HEK293 (cell line): ENCODE measurements at regions of chr10 and their contacts with region 1.

Region 1: DNA sequence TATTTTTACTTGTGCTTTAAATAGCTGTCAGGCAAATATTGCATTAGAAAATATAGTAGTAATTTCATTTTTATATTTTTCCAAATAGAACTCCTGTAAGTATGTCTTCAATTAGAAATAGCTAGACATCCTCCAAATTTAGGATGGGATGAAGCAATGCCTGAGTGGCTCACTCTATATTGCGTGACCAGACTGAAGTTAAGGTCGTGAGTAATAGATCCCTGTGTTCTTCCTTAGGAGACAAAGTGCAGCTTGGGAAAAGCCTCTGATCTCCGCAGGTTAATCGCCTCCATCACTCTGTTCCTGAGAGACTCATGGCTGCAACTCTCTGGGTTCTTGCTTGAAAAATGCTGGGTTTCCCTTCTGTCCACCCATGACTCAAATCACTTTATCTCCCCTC is 484.8 kb upstream of the ANKRD30A start:
- H3K4me3 ChIP-seq: no peak overlapping the region
- H3K27ac ChIP-seq: no peak overlapping the region
- H3K4me1 ChIP-seq: no peaks in the 10 kb centered on the region
- CTCF ChIP-seq: no peak

Region 2: DNA sequence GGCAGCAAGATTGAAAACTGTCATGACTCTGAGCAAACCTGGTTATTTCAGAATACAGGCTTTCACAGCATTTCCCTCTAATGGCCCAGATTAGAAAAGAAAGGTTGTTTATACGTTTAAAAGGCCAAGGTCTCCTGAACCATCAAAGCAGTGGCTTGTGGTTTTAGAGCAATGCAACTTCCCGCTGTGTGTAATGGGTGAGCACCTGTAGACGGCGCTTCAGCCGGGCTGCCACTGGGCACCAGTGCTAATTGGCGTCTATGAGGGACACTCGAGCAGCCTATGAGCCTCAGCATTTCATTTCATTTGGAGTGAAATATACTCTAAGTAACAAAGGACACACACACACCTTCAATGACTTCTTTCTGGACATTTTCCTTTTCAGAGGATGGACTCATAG is 327.5 kb before region 1 on chr10:
- CTCF ChIA-PET with region 1: no interaction called
- POLR2A ChIA-PET with region 1: no interaction called
- H3K4me3 ChIP-seq: no peak overlapping the region
- H3K27ac ChIP-seq: no peak overlapping the region
- H3K4me1 ChIP-seq: no peaks in the 10 kb centered on the region
- CTCF ChIP-seq: no peak

Region 3: DNA sequence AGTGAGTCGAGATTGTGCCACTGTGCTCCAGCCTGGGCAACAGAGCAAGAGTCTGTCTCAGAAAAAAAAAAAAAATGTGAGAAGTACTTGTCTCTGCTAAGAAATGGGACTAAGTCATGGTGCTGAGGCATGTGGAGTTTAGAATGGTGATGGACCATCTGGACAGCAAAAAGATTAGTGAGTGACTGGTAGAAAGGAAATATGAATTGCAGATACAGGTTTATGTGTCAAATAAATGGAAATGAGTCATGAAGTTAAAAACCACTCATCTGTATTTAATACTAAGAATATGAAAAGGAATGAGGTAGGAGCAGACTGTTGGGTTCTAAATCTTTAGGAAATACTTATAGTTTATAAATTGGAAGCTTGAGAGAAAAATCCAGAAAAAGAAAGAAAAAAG is 140.9 kb before region 1 on chr10:
- CTCF ChIA-PET with region 1: no interaction called
- POLR2A ChIA-PET with region 1: interaction called, 10 read pairs
- H3K4me3 ChIP-seq: no peak overlapping the region
- H3K27ac ChIP-seq: no peak overlapping the region
- H3K4me1 ChIP-seq: no peaks in the 10 kb centered on the region
- CTCF ChIP-seq: no peak

Region 4: DNA sequence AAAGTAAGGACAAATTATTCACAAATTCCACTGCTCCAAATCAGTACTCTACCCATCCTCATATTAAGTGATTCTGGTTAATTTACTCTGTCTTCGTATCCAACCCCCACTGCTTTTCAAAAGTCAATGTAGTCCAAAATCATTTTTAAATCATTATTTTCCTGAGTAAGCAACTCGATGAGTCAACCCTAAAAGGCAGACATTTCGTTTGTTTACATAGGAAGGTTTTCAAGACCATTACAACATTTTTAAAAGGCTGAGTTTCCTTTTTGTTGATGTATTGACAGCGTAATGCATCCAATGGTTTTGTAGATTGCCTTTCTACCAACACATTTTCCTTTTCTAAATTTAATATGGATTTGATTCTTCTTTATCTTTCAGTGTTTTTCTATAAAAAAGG is 38.3 kb before region 1 on chr10:
- CTCF ChIA-PET with region 1: no interaction called
- POLR2A ChIA-PET with region 1: no interaction called
- H3K4me3 ChIP-seq: no peak overlapping the region
- H3K27ac ChIP-seq: no peak overlapping the region
- H3K4me1 ChIP-seq: peaks cover 20% of the 10 kb centered on the region
- CTCF ChIP-seq: no peak

Region 5: GRCh38 chr10:36671607-36672006 is 31.0 kb after region 1 on chr10:
- CTCF ChIA-PET with region 1: no interaction called
- POLR2A ChIA-PET with region 1: no interaction called
- H3K4me3 ChIP-seq: no peak overlapping the region
- H3K27ac ChIP-seq: no peak overlapping the region
- H3K4me1 ChIP-seq: peaks cover 5% of the 10 kb centered on the region
- CTCF ChIP-seq: no peak